Gastrocnemius medialis (tissue), 4 donors: ENCODE measurements at regions of chr10 and their contacts with region 1.

Region 1: DNA sequence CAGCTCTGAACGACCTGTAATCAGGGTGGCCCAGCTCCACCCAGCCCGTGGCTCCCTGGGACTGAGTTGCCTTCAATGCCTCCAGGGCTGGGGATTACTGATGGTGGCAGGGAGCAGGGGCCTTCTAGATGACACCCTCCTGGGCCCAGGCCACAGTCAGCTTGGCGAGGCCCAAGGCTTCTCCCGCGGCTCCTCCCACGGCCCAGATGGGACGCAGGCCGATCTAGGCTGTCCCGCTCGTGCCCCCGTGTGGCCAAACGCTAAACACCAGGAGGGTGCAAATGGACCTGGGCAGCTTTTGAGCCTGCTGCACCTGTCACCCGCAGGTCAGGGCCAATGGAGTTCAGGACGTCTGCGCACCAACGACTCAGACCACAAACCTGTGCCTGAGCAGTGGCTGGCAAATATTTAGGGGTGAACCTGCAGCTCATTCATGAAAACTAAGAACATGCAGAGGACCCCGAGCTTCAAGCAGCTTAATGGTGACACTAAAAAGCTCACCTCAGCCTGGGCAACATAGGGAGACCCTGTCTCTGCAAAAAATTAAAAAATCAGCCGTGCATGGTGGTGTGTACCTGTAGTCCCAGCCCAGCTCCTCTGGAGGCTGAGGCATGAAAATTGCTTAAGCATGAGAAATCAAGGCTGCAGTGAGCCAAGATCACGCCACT is 43.2 kb downstream of the ASB13 start:
- DNase-seq: peak; percentile 67 to 85
- ATAC-seq: peak; percentile 81 to 83
- H3K4me3 ChIP-seq: peak overlapping the region in 1 of 4 donors; percentile 26
- H3K27ac ChIP-seq: peak overlapping the region; percentile 26 to 61 (median 46)
- H3K4me1 ChIP-seq: peaks cover 30 to 35% of the 10 kb centered on the region in 2 donors
- H3K27me3 ChIP-seq: no peaks in the 10 kb centered on the region
- CTCF ChIP-seq: peak; percentile 81 to 95 (median 92)
- POLR2A ChIP-seq: no peak

Region 2: GRCh38 chr10:5334196-5334880 is 288.9 kb before region 1 on chr10:
- in situ Hi-C with region 1: no loop called
- intact Hi-C with region 1: no loop called
- DNase-seq: no peak
- ATAC-seq: no peak
- H3K4me3 ChIP-seq: no peak overlapping the region
- H3K27ac ChIP-seq: no peak overlapping the region
- H3K4me1 ChIP-seq: no peaks in the 10 kb centered on the region
- H3K27me3 ChIP-seq: no peaks in the 10 kb centered on the region
- CTCF ChIP-seq: no peak
- POLR2A ChIP-seq: no peak

Region 3: DNA sequence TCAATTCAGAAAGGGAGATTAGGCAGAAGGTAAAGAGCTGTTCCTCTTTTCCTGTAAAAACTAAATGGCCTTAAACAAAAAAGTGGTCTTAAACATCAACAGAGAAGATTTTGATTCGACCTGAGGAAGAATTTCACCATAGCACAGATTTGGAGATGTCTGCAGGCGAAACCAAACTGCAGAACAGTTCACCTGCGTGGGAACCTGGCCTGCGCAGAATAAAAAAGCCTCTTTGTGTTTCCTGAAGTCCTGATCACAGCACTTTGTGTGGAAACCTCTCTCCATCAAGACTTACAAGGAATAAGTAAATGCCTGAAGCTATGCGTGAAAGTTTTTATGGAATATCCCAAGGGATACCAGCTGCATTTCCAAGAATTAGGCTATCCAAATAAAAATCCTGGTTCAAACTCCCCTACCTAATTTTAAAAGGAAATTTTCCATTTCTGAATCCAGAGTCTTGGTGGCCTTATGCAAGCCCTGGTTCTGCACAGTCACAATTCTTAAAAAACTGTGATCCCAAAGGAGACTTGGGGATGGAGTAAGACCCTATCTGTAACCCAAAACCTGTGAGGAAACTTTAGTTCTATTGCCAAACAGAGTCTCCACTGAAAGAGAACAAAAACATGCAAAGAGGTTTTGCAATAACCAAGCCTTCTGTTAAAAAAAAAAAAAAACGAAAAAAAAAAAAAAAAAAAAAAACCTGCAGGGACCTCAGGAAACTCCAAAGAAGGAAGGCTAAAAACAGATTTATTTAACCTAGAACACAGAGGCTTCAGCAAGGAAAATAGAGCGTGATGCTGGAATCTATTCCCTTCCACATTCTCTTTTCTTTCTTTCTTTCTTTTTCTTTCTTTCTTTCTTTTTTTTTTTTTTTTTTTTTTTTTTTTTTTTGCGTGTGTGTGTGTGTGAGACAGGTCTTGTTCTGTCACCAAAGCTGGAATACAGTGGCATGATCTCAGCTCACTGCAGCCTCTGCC is 88.0 kb before region 1 on chr10:
- in situ Hi-C with region 1: loop called in 1 of 4 experiments (anchors 10 kb)
- intact Hi-C with region 1: loop called (anchors 5 kb)
- DNase-seq: no peak
- ATAC-seq: peak; percentile 87 to 92
- H3K4me3 ChIP-seq: no peak overlapping the region
- H3K27ac ChIP-seq: peak overlapping the region; percentile 41 to 50 (median 43)
- H3K4me1 ChIP-seq: peaks cover 4 to 6% of the 10 kb centered on the region in 2 donors
- H3K27me3 ChIP-seq: no peaks in the 10 kb centered on the region
- CTCF ChIP-seq: no peak
- POLR2A ChIP-seq: no peak